MCF 10A (cell line): ENCODE measurements at regions of chr12 and their contacts with region 1.

Region 1: DNA sequence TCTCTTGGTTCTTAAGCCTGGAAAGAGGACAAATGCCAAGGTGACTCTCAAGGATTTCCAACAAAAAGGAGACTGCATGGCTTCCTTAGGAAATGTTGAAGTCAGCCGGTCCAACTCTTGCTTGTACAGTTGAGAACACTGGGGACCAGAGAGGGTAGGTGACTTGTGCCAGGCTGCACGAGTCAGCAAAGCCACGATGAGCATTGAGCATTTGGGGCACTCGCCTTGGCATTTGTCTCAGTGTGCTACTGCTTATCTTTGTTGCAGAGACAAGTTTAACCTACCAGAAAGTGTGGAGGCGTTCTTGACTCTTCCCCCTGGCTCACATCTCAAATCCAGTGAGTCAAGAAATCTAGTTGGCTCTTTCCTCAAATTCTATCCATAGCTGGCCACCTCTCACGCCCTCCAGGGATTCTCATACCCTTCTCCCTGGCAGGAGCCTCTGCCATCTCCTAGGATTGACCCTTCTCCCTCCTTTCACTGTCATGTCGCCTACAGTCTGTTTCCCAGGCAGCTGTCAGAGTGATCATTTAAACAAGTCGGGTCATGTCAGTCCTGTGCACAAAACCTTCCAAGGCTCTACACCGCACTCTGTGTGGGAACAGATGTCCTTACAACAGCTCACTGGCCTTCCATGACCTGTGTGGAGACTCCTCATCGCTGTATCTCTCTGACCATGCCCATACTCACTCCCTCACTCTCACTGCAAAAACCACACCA is 17.2 kb upstream of the KRT83 start:
- DNase-seq: peak; percentile 81
- H3K4me3 Mint-ChIP-seq: peak overlapping the region; percentile 39
- H3K27ac Mint-ChIP-seq: peak overlapping the region; percentile 73
- H3K4me1 Mint-ChIP-seq: peaks cover 29% of the 10 kb centered on the region
- H3K27me3 Mint-ChIP-seq: no peaks in the 10 kb centered on the region
- CTCF ChIP-seq: no peak

Region 2: GRCh38 chr12:52147367-52147972 is 190.9 kb before region 1 on chr12:
- CTCF ChIA-PET with region 1: no interaction called
- POLR2A ChIA-PET with region 1: interaction called, 11 read pairs
- intact Hi-C with region 1: no loop called
- DNase-seq: peak; percentile 98
- H3K4me3 Mint-ChIP-seq: peak overlapping the region; percentile 39
- H3K27ac Mint-ChIP-seq: peak overlapping the region; percentile 97
- H3K4me1 Mint-ChIP-seq: peaks cover 76% of the 10 kb centered on the region
- H3K27me3 Mint-ChIP-seq: no peaks in the 10 kb centered on the region
- CTCF ChIP-seq: no peak

Region 3: DNA sequence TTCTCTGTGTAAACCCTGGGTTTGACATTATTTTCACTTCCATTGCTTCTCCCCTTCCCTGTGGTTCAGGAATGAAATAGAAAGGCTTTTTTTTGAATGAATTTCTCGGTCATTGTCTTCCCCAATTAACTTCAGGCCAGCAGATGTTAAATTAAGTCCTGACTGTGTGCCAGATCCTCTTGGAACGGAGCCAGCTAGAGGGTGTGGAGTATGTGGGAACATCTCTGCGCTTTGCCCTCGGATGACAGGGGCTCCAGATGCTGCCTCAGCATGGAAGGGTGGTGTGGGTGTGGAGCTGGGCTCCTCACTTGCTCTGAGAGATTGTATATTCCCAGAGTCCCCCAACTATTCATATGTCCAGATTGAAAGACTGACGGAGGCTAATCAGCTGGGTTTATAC is 15.8 kb after region 1 on chr12:
- CTCF ChIA-PET with region 1: no interaction called
- POLR2A ChIA-PET with region 1: no interaction called
- intact Hi-C with region 1: no loop called
- DNase-seq: peak; percentile 20
- H3K4me3 Mint-ChIP-seq: no peak overlapping the region
- H3K27ac Mint-ChIP-seq: no peak overlapping the region
- H3K4me1 Mint-ChIP-seq: peaks cover 3% of the 10 kb centered on the region
- H3K27me3 Mint-ChIP-seq: peaks cover 30% of the 10 kb centered on the region
- CTCF ChIP-seq: no peak